Activated naive CD4-positive, alpha-beta T cell treated with anti-CD3 and anti-CD28 coated beads, Interleukin-2, amount 10 ng/mL, durations not matched to agents 7 days and 5 days (primary cell): ENCODE measurements at regions of chr1 and their contacts with region 1.

Region 1: GRCh38 chr1:239719642-239720258 is 333.4 kb downstream of the CHRM3 start:
- DNase-seq: peak; percentile 76
- H3K4me3 Mint-ChIP-seq: no peak overlapping the region
- H3K27ac Mint-ChIP-seq: peak overlapping the region; percentile 98
- H3K4me1 Mint-ChIP-seq: peaks cover 27% of the 10 kb centered on the region
- H3K27me3 Mint-ChIP-seq: no peaks in the 10 kb centered on the region

Region 2: GRCh38 chr1:239763850-239764249 is 44.1 kb after region 1 on chr1:
- CTCF ChIA-PET with region 1: no interaction called
- DNase-seq: no peak
- H3K4me3 Mint-ChIP-seq: no peak overlapping the region
- H3K27ac Mint-ChIP-seq: no peak overlapping the region
- H3K4me1 Mint-ChIP-seq: no peaks in the 10 kb centered on the region
- H3K27me3 Mint-ChIP-seq: no peaks in the 10 kb centered on the region

Region 3: DNA sequence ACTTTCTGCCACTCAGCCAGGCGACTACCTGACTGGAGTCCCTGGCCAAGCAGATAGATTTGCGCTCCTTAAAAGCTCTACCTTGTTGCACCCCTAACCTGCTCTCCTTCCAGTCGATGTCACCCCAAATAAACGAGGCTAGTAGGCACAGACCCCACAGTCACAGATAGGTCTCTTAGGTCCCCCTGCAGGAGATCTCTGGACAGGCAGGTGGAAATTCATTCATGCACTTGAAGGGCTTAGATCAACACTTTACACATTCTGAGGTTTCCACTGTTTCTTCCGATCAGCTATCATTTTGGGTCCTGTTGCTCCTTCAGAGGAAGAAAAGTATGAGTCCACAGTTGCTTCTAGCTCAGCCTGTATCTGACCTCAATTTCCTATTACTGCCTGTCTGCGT is 99.3 kb after region 1 on chr1:
- CTCF ChIA-PET with region 1: interaction called, 16 read pairs
- DNase-seq: peak; percentile 27
- H3K4me3 Mint-ChIP-seq: no peak overlapping the region
- H3K27ac Mint-ChIP-seq: no peak overlapping the region
- H3K4me1 Mint-ChIP-seq: peaks cover 10% of the 10 kb centered on the region
- H3K27me3 Mint-ChIP-seq: no peaks in the 10 kb centered on the region